Aorta (tissue), 5 donors: ENCODE measurements at regions of chr22 and their contacts with region 1.

Region 1: GRCh38 chr22:50562523-50563412 is at the start of gene SYCE3:
- DNase-seq: peak; percentile 97 to 99
- ATAC-seq: peak; percentile 98
- H3K4me3 ChIP-seq: peak within 1 kb of the TSS in 1 of 2 donors; percentile 58
- H3K27ac ChIP-seq: no peak within 1 kb of the TSS
- H3K4me1 ChIP-seq: no peaks in the 10 kb centered on the region
- H3K27me3 ChIP-seq: no peaks in the 10 kb centered on the region
- total RNA-seq, gene SYCE3: not detected

Region 2: GRCh38 chr22:50525390-50526068 is 37.2 kb before region 1 on chr22 and contains the start of gene SCO2:
- intact Hi-C with region 1: loop called in 1 of 2 experiments (anchors 5 kb)
- DNase-seq: peak; percentile 98 to 99
- ATAC-seq: peak; percentile 86
- H3K4me3 ChIP-seq: peak within 1 kb of the TSS; percentile 51 to 53
- H3K27ac ChIP-seq: peak within 1 kb of the TSS in 1 of 2 donors; percentile 54
- H3K4me1 ChIP-seq: no peaks in the 10 kb centered on the region
- H3K27me3 ChIP-seq: no peaks in the 10 kb centered on the region
- total RNA-seq, gene SCO2: 4.7 to 5.1 TPM

Region 3: DNA sequence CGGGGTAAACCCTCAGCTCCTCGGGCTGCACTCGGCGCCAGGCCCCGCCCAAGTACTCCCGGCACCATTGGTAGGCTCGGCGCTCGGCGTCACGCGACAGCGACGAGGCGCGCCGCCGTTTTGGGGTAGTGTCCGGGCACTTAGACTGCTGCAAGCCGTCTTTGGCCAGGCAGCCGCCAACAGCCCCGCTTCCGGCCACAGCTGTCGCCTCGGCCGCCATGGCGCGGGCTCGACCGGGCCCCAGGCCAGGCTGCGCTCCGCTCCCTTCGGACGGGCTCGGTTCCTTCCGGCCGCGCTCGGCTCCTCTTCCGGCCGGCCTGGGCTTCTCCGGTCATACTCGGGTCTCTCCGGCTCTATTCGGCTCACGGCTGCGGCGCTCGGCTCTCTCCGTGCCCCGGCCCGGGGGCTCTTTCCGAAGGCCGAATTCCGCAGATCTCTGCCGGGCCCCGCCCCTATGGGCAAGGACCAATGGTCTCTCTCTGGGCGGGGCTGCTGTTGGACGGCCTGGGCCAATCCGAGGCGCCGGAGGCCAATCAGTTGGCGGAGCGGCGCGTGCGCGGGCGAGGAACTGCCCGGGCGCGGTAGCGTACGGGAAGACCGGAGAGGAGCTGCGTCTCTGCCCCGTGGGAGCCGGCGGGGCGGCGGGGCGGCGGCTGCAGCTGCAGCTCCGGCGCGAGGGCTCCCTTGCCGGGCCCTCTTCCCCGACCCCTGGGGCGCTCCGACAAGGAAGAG is 20.0 kb after region 1 on chr22 and contains the start of gene CHKB:
- intact Hi-C with region 1: loop called in 1 of 2 experiments (anchors 2 kb)
- DNase-seq: peak; percentile 99
- ATAC-seq: peak; percentile 99
- H3K4me3 ChIP-seq: peak within 1 kb of the TSS; percentile 73 to 82
- H3K27ac ChIP-seq: peak within 1 kb of the TSS; percentile 68 to 92
- H3K4me1 ChIP-seq: no peaks in the 10 kb centered on the region
- H3K27me3 ChIP-seq: no peaks in the 10 kb centered on the region
- total RNA-seq, gene CHKB: 36.5 to 78.8 TPM